ENCODE measurements at regions of chr7 and their contacts with region 1.

Region 1: DNA sequence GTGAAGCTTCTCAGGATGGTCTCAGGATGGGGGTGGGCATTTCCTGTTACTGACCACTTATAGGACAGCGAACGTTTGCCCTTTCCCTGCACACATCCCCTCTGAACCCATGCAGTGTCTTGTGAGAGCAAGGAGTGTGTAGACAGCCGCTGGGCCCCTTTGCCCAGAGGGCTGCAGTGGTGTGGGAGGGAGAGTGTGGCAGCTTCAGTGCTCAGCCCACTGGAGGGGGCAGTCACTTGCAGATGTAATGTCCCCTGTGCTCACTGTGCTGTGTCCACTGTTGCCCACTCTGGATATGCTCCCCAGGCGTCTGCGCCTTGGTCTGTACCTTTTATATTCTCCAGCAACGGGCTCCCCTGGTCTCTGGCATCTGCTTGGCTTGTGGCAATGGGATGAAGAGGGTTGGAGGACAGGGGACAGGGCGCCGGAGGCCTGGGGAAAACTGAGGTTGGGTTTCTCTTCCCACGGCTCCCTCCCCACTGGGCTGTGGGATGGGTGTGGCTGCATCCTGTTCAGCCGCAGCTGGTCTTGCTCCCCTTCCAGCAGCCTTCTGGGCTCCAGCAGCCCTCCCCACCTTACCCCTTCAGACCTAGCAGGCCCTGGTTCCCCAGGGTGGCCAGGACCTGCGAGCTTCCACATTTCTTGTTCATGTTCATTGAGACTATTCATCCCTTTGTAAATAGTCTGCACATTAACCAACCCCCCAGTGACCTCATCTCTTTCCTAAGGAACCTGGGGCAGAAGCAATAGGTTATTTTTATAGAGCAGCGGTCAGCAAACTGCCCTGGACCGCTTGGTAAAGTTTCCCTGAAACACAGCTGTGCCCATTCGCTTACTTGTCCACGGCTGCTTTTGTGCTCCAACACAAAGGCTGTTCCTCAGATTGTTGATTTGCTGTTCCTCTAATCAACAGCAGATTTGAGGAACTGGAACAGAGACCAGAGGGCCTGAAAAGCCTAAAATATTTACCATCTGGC is 6.1 kb downstream of the ZNF789 start:
- DNase-seq: peak; percentile 74

Region 2: GRCh38 chr7:99447943-99448342 is 30.8 kb before region 1 on chr7:
- intact Hi-C with region 1: no loop called
- DNase-seq: no peak

Region 3: GRCh38 chr7:99504603-99505323 is 26.0 kb after region 1 on chr7 and contains the start of gene ZKSCAN5:
- intact Hi-C with region 1: loop called in 1 of 2 experiments (anchors 1 kb)
- DNase-seq: peak; percentile 100
- total RNA-seq, gene ZKSCAN5: 5.9 to 7.0 TPM

Measured in posterior vena cava (tissue), 2 donors.